ENCODE measurements at regions of chr13 and their contacts with region 1.

Region 1: DNA sequence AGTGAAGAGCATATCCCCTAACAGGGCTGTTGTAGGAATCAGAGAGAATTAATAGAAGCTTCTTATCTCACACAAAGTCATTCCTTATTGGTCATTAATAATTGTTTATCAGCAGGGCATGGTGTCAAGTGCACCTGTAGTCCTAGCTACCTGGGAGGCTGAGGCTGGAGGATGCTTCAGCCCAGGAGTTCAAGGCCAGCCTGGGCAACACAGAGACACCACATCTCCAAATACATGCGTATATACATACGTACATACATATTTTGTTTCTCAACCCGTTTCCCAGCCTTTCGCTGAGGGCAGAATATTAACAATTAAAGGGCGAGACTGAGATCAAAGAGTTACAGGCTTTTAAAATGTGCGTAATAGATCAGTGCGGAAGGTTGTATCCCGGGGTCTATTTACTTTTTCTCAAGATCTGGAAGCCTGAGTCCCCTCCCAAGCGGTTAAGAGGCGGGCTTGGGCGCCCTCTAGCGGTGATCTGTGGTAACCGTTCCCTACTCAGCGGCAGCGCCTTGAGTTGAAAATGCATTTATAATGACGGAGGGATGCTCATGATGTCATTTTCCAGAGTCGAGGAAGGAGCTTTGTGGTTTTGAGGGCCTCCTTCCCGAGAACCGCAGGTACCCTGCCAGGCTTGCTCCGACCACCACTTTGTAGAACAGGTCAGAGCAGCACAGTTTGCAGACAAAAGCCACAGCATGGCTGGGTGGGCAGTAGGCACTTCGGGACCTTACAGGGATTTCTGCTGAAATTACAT is 169.6 kb upstream of the GPR12 start:
- DNase-seq: peak; percentile 77
- H3K4me3 Mint-ChIP-seq: no peak overlapping the region
- H3K27ac Mint-ChIP-seq: no peak overlapping the region
- H3K4me1 Mint-ChIP-seq: peaks cover 7% of the 10 kb centered on the region
- H3K27me3 Mint-ChIP-seq: peaks cover 4% of the 10 kb centered on the region

Region 2: DNA sequence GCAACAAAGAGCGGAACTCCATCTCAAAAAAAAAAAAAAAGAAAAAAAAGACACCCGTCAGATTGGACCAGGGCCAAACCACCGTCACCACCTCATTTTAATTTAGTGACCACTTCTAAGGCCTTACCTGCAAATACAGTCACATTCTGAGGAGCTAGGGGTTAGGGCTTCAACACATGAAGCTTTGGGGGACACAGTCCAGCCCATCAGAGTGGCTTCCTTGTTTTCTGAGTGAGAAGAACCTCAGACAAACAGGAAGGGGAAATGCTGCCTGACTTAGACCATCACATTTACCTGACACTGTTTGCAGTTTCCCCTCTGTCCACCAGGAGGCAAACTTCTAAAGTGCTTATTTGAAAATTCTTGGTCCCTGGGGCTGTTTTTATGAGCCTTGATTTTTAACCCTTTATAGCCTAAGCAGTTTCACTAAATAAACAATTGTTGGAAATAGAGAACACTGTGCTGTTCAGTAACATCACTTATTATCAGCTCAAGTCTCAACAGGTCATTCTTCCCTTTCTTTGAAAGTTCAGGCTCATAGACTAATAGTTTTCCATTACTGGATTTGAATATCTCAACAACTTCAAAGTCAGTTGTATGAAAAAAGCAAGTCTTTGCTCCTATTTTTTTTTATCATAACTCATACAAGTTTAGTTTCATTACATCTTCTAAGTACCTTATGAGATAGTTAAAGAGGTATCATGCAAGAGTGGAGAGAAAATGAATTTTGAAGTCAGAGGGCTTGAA is 447.5 kb before region 1 on chr13:
- CTCF ChIA-PET with region 1: interaction called, 3 read pairs
- POLR2A ChIA-PET with region 1: no interaction called
- intact Hi-C with region 1: loop called (anchors 1 kb)
- DNase-seq: peak; percentile 72
- H3K4me3 Mint-ChIP-seq: no peak overlapping the region
- H3K27ac Mint-ChIP-seq: peak overlapping the region; percentile 8
- H3K4me1 Mint-ChIP-seq: peaks cover 13% of the 10 kb centered on the region
- H3K27me3 Mint-ChIP-seq: no peaks in the 10 kb centered on the region

Region 3: DNA sequence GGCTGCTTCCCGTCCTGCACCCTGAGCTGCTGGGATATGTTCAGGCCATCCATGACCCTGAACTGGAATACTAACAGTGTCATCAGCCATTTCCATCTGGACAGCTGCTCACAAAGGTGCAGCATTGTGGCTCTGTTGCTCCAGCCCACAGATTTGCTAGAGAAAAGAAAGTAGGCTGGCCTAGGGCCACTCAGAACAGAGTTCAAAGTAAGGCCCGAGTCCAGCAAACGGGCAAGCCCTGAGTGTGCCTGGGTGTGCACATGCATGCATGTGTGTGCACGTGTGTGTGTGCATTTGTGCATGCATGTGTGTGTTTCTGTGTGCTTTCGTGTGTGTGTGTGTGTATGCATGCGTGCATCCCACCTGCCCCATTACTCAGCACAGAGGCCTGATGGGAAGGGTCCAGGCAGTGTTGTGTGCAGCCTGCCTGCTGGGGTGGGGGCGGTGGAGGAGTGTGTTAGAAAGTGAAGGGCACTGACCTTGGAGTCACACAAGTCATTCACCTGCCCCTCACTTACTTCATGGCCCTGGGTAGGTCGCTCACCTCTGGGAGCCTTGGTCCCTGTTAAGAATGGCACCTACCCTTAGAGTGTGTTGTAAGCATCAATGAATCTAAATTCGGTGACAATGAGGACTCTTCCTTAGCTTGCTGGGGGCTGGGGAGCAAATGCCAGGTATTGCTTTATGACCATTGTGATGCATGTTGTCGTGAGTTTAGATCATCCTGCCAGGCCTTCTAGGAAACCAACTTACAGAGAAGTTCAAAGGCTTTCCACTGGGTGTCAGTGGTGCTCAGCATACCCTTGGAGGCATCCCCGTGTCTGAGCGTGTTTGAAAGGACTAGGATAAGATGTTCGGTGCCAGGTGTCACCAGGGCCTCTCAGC is 222.8 kb before region 1 on chr13:
- CTCF ChIA-PET with region 1: interaction called, 5 read pairs
- POLR2A ChIA-PET with region 1: no interaction called
- intact Hi-C with region 1: loop called (anchors 1 kb)
- DNase-seq: peak; percentile 45
- H3K4me3 Mint-ChIP-seq: no peak overlapping the region
- H3K27ac Mint-ChIP-seq: no peak overlapping the region
- H3K4me1 Mint-ChIP-seq: no peaks in the 10 kb centered on the region
- H3K27me3 Mint-ChIP-seq: peaks cover 4% of the 10 kb centered on the region

Region 4: GRCh38 chr13:26914624-26915023 is 15.5 kb before region 1 on chr13:
- CTCF ChIA-PET with region 1: interaction called, 14 read pairs
- POLR2A ChIA-PET with region 1: no interaction called
- intact Hi-C with region 1: no loop called
- DNase-seq: peak; percentile 31
- H3K4me3 Mint-ChIP-seq: no peak overlapping the region
- H3K27ac Mint-ChIP-seq: no peak overlapping the region
- H3K4me1 Mint-ChIP-seq: peaks cover 6% of the 10 kb centered on the region
- H3K27me3 Mint-ChIP-seq: peaks cover 9% of the 10 kb centered on the region

Region 5: GRCh38 chr13:26946684-26947343 is 16.7 kb after region 1 on chr13:
- CTCF ChIA-PET with region 1: interaction called, 21 read pairs
- POLR2A ChIA-PET with region 1: interaction called, 6 read pairs
- intact Hi-C with region 1: no loop called
- DNase-seq: no peak
- H3K4me3 Mint-ChIP-seq: no peak overlapping the region
- H3K27ac Mint-ChIP-seq: no peak overlapping the region
- H3K4me1 Mint-ChIP-seq: no peaks in the 10 kb centered on the region
- H3K27me3 Mint-ChIP-seq: peaks cover 8% of the 10 kb centered on the region

Region 6: GRCh38 chr13:27251166-27252091 is 321.3 kb after region 1 on chr13 and contains the start of gene RPL21:
- CTCF ChIA-PET with region 1: no interaction called
- POLR2A ChIA-PET with region 1: no interaction called
- intact Hi-C with region 1: no loop called
- DNase-seq: peak; percentile 92
- H3K4me3 Mint-ChIP-seq: peak within 1 kb of the TSS; percentile 94
- H3K27ac Mint-ChIP-seq: peak within 1 kb of the TSS; percentile 95
- H3K4me1 Mint-ChIP-seq: peaks cover 48% of the 10 kb centered on the region
- H3K27me3 Mint-ChIP-seq: no peaks in the 10 kb centered on the region
- total RNA-seq, gene RPL21: 1,539 to 1,545 TPM